ENCODE measurements at regions of chr18 and their contacts with region 1.

Region 1: GRCh38 chr18:26710470-26711096 is 154.9 kb downstream of the AQP4 start:
- DNase-seq: peak; percentile 52
- H3K4me3 Mint-ChIP-seq: peak overlapping the region; percentile 19
- H3K27ac Mint-ChIP-seq: no peak overlapping the region
- H3K4me1 Mint-ChIP-seq: peaks cover 48% of the 10 kb centered on the region
- H3K27me3 Mint-ChIP-seq: peaks cover 7% of the 10 kb centered on the region

Region 2: GRCh38 chr18:26458526-26459232 is 251.9 kb before region 1 on chr18:
- intact Hi-C with region 1: loop called (anchors 5 kb)
- DNase-seq: no peak
- H3K4me3 Mint-ChIP-seq: no peak overlapping the region
- H3K27ac Mint-ChIP-seq: peak overlapping the region; percentile 7
- H3K4me1 Mint-ChIP-seq: peaks cover 18% of the 10 kb centered on the region
- H3K27me3 Mint-ChIP-seq: no peaks in the 10 kb centered on the region

Region 3: GRCh38 chr18:26656944-26657536 is 53.5 kb before region 1 on chr18:
- intact Hi-C with region 1: loop called (anchors 2 kb)
- DNase-seq: no peak
- H3K4me3 Mint-ChIP-seq: peak overlapping the region; percentile 80
- H3K27ac Mint-ChIP-seq: peak overlapping the region; percentile 3
- H3K4me1 Mint-ChIP-seq: peaks cover 13% of the 10 kb centered on the region
- H3K27me3 Mint-ChIP-seq: peaks cover 71% of the 10 kb centered on the region

Region 4: DNA sequence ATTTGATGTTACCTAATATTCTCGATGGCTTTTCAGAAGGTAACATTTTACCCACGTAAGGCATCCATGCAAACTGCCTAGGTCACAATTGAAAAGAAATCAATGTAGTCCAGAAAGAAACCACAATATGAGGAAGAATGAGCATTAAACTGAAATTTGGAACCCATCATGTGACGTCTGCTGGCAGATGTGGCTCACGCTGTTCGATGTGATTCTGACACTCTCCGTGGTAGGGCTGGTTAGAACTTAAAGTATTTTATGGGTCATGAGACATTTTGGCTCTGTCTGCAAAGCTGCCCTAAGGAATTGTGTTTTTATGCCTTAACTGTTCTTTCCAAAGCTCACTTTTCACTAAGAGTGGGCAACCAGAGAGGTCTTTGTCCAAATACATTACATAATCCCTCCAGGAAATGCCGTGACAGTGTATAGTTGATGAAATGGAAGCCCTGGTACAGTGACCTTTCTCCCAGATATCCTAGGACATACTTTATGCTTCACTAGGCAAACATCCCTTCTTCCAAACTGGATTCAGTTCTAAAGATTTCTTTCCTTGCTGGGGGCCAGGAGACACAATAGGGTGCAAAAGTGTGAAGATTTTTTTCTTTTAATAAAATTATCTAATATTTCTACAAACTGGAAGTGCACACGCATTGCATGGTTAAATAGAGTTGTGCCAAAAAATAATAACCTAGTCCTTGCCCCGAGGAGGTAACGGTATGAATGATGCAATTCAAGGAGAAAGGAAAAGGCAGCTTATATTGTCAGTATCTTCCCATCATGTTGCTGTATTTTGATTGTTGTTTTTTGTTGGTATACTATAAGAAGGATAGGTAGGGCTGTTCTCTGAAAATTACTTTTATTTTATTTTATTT is 35.9 kb after region 1 on chr18:
- intact Hi-C with region 1: no loop called
- DNase-seq: no peak
- H3K4me3 Mint-ChIP-seq: no peak overlapping the region
- H3K27ac Mint-ChIP-seq: no peak overlapping the region
- H3K4me1 Mint-ChIP-seq: no peaks in the 10 kb centered on the region
- H3K27me3 Mint-ChIP-seq: peaks cover 20% of the 10 kb centered on the region

Measured in activated T-helper 2 cell treated with anti-CD3 and anti-CD28 coated beads, Interferon-gamma antibody, Interleukin-2, Interleukin-4, amounts not matched to agents 10 μg/mL and 5 μg/mL and 100 μg/mL, durations not matched to agents 14 hours and 24 hours and 36 hours (primary cell).